Heart right ventricle (tissue), 16 donors: ENCODE measurements at regions of chr6 and their contacts with region 1.

Region 1: GRCh38 chr6:108896111-108896661 is 48.0 kb downstream of the ARMC2 start:
- DNase-seq: no peak
- ATAC-seq: peak in 5 of 8 donors; percentile 22 to 51 (median 33)
- H3K4me3 ChIP-seq: no peak overlapping the region
- H3K27ac ChIP-seq: peak overlapping the region in 8 of 10 donors; percentile 14 to 82 (median 70)
- H3K4me1 ChIP-seq: peaks cover 0 to 44% (median 21%) of the 10 kb centered on the region in 9 donors
- H3K27me3 ChIP-seq: no peaks in the 10 kb centered on the region
- CTCF ChIP-seq: no peak

Region 2: GRCh38 chr6:108541838-108542759 is 354.1 kb before region 1 on chr6:
- intact Hi-C with region 1: loop called in 9 of 10 experiments (anchors 1 to 5 kb)
- DNase-seq: peak; percentile 40 to 72
- ATAC-seq: peak; percentile 65 to 90 (median 82)
- H3K4me3 ChIP-seq: peak overlapping the region in 1 of 10 donors; percentile 6
- H3K27ac ChIP-seq: no peak overlapping the region
- H3K4me1 ChIP-seq: peaks cover 0 to 9% (median 0%) of the 10 kb centered on the region in 9 donors
- H3K27me3 ChIP-seq: no peaks in the 10 kb centered on the region
- CTCF ChIP-seq: peak; percentile 76 to 92 (median 85)

Region 3: DNA sequence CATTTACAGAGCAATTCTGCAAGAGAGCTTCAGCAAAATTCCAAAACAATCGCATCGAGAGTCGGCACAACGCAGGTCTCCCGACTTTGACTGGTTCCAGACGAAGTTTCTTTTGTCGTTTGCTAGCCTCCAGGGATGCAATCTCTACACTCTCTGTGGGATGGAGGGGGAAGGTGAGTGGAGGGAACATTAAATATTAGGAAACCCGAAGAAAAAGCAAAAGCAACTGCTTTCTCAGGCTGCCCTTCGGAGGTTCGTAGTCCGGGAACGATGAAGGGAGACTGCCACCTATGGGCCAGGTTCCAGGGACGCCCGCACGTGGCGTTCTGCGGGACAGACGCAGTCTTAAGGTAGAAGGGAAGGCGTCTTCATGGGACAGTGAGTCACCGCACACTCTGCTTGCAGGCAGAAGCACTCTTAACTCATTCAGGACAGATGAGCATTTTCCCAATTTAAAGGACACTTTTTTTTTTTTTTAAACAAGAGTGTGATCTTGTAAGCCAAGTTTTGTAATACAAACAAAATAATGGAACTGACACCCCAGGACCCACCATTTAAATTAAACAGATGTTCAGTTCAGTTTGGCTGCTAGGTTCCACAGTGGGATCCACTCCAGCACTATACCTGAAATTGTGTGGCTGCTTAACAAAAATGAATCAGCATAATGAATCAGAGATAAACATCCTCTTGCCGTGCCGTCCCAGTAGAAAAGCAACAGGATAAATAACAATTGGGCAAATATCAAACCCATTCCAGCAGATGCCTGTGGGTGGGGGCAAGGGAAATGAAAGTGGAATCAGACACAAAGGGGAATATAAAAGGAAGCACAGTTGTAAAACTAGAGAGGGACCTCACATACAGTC is 113.8 kb before region 1 on chr6:
- intact Hi-C with region 1: loop called in 2 of 10 experiments (anchors 5 kb)
- DNase-seq: peak; percentile 82
- ATAC-seq: peak; percentile 89 to 96 (median 93)
- H3K4me3 ChIP-seq: peak overlapping the region in 9 of 10 donors; percentile 31 to 64 (median 55)
- H3K27ac ChIP-seq: peak overlapping the region in 5 of 10 donors; percentile 5 to 42 (median 33)
- H3K4me1 ChIP-seq: peaks cover 0 to 21% (median 7%) of the 10 kb centered on the region in 9 donors
- H3K27me3 ChIP-seq: no peaks in the 10 kb centered on the region
- CTCF ChIP-seq: peak; percentile 41 to 93 (median 82)

Region 4: GRCh38 chr6:108835218-108835850 is 60.9 kb before region 1 on chr6:
- intact Hi-C with region 1: loop called in 5 of 10 experiments (anchors 5 kb)
- DNase-seq: peak; percentile 88 to 89
- ATAC-seq: peak; percentile 89 to 96 (median 94)
- H3K4me3 ChIP-seq: no peak overlapping the region
- H3K27ac ChIP-seq: peak overlapping the region in 3 of 10 donors; percentile 8 to 39 (median 22)
- H3K4me1 ChIP-seq: peaks cover 0 to 32% (median 0%) of the 10 kb centered on the region in 9 donors
- H3K27me3 ChIP-seq: no peaks in the 10 kb centered on the region
- CTCF ChIP-seq: peak; percentile 85 to 97 (median 95)

Region 5: GRCh38 chr6:108848116-108848868 is 47.9 kb before region 1 on chr6 and contains the start of gene ARMC2:
- intact Hi-C with region 1: loop called in 2 of 10 experiments (anchors 5 kb)
- DNase-seq: peak; percentile 93 to 97
- ATAC-seq: peak; percentile 97 to 98 (median 98)
- H3K4me3 ChIP-seq: peak within 1 kb of the TSS; percentile 56 to 88 (median 75)
- H3K27ac ChIP-seq: peak within 1 kb of the TSS; percentile 63 to 95 (median 85)
- H3K4me1 ChIP-seq: peaks cover 0 to 51% (median 31%) of the 10 kb centered on the region in 9 donors
- H3K27me3 ChIP-seq: no peaks in the 10 kb centered on the region
- CTCF ChIP-seq: no peak
- total RNA-seq, gene ARMC2: 10.6 to 16.4 (median 13.0) TPM

Region 6: GRCh38 chr6:108947114-108947854 is 51.1 kb after region 1 on chr6:
- intact Hi-C with region 1: loop called in 5 of 10 experiments (anchors 2 to 5 kb)
- DNase-seq: peak in 1 of 2 donors; percentile 60
- ATAC-seq: peak in 7 of 8 donors; percentile 41 to 63 (median 52)
- H3K4me3 ChIP-seq: no peak overlapping the region
- H3K27ac ChIP-seq: peak overlapping the region; percentile 84 to 98 (median 92)
- H3K4me1 ChIP-seq: peaks cover 31 to 85% (median 69%) of the 10 kb centered on the region in 9 donors
- H3K27me3 ChIP-seq: no peaks in the 10 kb centered on the region
- CTCF ChIP-seq: peak in 1 of 9 donors; percentile 5

Region 7: DNA sequence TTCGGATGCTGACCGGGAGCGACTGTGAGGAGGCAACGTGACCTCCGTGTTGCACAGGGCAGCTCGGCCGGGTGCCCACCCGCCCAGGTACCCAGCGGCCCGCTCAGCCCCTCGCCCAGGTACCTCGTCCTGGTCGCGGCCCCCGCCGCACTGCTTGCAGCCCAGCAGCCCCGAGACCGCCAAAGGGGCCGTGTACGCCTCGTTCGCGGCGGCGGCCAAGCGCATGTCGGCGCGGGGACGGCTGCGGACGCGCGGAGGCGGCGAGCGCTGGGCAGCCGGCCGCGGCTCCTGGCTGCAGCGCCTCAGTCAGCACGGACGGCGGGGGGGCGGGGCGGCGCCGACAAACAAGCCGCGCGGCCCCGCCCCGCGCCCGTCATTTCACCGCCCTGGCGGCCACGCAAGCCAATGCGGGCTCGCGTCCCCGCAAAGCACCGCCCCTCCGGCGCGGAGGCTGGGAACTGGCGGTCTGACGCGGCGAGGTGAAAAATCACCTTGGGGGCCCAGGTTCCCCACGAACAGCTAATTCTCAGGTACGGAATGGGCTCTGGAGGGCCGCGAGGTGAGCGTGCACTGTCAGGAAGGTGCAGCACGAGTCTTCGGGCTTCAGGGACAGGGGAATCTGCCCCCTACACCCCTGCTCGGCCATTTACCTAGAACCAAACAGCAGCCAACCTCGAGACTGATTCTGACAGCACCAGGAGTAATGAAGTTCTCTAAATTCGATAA is 113.2 kb after region 1 on chr6:
- intact Hi-C with region 1: loop called in 1 of 10 experiments (anchors 10 kb)
- DNase-seq: peak; percentile 93 to 96
- ATAC-seq: peak; percentile 93 to 98 (median 96)
- H3K4me3 ChIP-seq: peak overlapping the region; percentile 67 to 98 (median 94)
- H3K27ac ChIP-seq: peak overlapping the region; percentile 91 to 98 (median 96)
- H3K4me1 ChIP-seq: peaks cover 0 to 74% (median 59%) of the 10 kb centered on the region in 9 donors
- H3K27me3 ChIP-seq: no peaks in the 10 kb centered on the region
- CTCF ChIP-seq: peak in 7 of 9 donors; percentile 11 to 52 (median 15)